ENCODE measurements at regions of chr12 and their contacts with region 1.

Region 1: DNA sequence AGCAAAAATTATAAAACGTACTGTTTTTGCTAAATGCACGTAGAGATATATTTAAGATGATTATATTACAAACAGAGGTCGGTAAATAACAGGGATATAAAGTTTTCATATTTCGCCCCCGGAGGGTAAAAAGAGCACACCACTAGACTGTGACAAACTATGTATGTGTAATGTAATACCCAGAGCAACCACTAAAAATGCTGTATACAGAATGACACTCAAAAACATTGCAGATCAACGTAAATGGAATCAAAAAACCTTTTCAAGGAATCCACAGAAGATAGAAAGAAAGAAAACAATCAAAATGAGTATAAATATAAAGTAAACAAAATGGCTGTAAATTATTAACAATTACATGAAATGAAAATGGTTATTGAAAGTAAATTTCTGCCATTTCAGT is 37.6 kb upstream of the PRB4 start:
- DNase-seq: no peak
- H3K4me3 ChIP-seq: no peak overlapping the region
- H3K27ac ChIP-seq: no peak overlapping the region
- H3K4me1 ChIP-seq: peaks cover 6% of the 10 kb centered on the region
- H3K27me3 ChIP-seq: no peaks in the 10 kb centered on the region
- CTCF ChIP-seq: peak in 1 of 2 donors; percentile 15
- POLR2A ChIP-seq: no peak

Region 2: DNA sequence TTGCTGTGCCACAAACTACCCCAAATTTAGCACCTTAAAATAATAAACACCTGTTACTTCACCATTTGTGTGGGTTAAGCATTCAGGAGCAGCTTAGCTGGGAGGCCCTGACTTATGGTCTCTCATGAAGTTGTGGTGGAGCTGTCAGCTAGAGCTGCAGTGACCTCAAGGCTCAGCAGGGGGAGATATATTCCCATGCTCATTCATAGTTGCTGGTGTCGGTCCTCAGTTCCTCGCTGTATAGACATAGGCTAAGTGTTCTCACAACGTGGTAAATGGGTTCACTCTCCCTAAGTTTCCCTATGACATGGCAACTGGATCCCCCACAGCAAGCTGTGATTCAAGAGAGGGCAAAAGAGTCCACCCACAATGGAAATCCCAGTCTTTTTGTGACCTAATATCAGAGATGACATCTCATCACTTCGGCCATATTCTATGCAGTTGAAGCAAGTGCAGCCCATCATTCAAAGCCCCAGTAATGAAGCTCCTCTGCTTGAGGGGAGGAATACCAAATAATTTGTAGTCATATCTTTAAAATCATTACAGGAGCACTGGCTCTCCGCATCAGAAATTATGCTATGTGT is 119.4 kb before region 1 on chr12:
- CTCF ChIA-PET with region 1: no interaction called
- POLR2A ChIA-PET with region 1: no interaction called
- dilution Hi-C with region 1: no loop called
- intact Hi-C with region 1: no loop called
- DNase-seq: peak; percentile 73
- H3K4me3 ChIP-seq: no peak overlapping the region
- H3K27ac ChIP-seq: no peak overlapping the region
- H3K4me1 ChIP-seq: no peaks in the 10 kb centered on the region
- H3K27me3 ChIP-seq: peaks cover 5 to 13% of the 10 kb centered on the region in 2 experiments
- CTCF ChIP-seq: peak; percentile 80 to 84
- POLR2A ChIP-seq: no peak

Region 3: DNA sequence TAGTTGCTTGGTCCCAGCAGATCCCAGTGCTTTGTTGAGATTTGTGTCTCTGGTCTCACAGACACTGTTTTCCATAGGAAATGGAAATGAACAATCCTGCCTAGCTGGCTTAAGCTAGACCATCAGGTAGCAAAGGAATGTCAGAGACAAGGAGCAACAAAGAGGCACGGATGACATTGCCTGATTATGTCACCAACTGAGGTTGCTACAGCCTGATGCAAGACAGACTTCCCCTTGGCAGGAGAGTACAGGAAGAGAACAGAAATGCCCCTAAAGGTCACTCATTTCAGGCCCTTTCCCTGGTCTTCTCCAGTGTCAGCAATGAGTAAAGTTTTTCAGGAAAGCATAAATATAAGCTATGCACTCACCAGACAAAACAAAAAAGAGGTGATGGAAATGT is 49.6 kb after region 1 on chr12:
- CTCF ChIA-PET with region 1: no interaction called
- POLR2A ChIA-PET with region 1: no interaction called
- dilution Hi-C with region 1: no loop called
- intact Hi-C with region 1: loop called (anchors 2 kb)
- DNase-seq: peak; percentile 22
- H3K4me3 ChIP-seq: no peak overlapping the region
- H3K27ac ChIP-seq: no peak overlapping the region
- H3K4me1 ChIP-seq: no peaks in the 10 kb centered on the region
- H3K27me3 ChIP-seq: peaks cover 0 to 5% of the 10 kb centered on the region in 2 experiments
- CTCF ChIP-seq: no peak
- POLR2A ChIP-seq: no peak